H1 (cell line): ENCODE measurements at regions of chr2 and their contacts with region 1.

Region 1: DNA sequence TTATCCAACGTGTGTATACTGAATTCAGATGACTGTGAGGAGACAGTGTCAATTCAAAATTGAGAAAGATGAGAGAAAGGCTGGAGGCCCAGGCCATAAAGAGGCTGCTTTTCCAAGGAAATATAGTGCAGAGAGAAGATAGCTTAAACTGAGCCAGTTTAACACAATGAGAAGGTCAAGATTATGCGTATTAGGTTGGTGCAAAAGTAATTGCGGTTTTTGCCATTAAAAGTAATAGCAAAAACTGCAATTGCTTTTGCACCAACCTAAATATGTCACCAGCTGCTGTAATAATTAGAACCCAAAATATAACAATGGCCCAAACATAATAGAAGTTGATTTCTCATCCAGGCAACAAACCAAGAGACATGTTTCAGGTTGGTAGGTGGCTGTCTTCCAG is 148.7 kb upstream of the ATP5MC3 start:
- DNase-seq: no peak
- H3K4me3 ChIP-seq: no peak overlapping the region
- H3K27ac ChIP-seq: no peak overlapping the region
- H3K4me1 ChIP-seq: no peaks in the 10 kb centered on the region
- H3K27me3 ChIP-seq: no peaks in the 10 kb centered on the region
- CTCF ChIP-seq: no peak
- EP300 ChIP-seq: no peak
- POLR2A ChIP-seq: no peak
- RAD21 ChIP-seq: no peak

Region 2: DNA sequence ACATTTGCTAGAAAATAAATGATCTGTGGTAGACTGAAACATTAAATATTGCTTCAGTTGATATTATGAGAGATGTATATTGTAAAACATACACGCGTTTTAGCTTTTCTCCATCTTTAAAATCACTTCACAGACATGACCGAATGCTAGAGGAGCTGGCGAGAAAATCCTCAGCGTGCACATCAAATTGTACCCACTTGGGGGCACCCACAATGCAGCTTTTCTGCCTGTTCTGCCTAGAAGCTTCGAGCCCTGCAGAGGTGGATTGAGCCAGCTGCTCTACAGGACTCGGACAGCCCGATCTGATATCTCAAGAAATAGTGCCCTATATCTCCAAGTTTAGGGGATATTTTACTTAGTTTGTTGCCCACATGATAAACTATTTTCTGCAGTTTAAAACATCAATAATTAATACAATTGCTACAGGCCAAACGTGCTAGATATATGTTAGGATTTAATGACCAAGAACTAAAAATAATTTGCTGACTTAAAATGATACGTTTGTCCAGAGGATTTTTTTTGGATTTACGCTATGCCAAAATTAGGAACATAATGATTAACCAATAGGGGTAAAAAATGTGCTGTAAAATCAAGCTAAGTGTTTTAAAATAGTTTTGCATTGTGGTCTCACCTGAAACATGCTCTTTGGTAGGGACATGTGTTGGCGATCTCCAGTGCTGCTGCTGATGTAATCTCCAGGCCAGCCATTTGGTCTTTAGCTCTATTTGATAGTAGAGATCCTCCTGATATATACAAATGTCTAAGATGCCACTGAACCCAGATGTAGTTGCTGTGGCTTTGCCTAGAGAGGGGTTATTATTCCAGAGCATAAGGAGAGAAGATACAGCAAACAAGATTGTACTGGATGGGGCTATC is 126.3 kb before region 1 on chr2:
- CTCF ChIA-PET with region 1: interaction called, 19 read pairs
- POLR2A ChIA-PET with region 1: interaction called, 3 read pairs
- DNase-seq: peak in 1 of 2 experiments; percentile 67
- H3K4me3 ChIP-seq: no peak overlapping the region
- H3K27ac ChIP-seq: no peak overlapping the region
- H3K4me1 ChIP-seq: no peaks in the 10 kb centered on the region
- H3K27me3 ChIP-seq: no peaks in the 10 kb centered on the region; a peak in 1 of 7 replicates
- CTCF ChIP-seq: peak; percentile 59 to 75 (median 73)
- EP300 ChIP-seq: no peak
- POLR2A ChIP-seq: no peak
- RAD21 ChIP-seq: peak; percentile 70 to 83

Region 3: GRCh38 chr2:175304541-175304940 is 25.7 kb before region 1 on chr2:
- CTCF ChIA-PET with region 1: interaction called, 18 read pairs
- POLR2A ChIA-PET with region 1: no interaction called
- DNase-seq: no peak
- H3K4me3 ChIP-seq: no peak overlapping the region
- H3K27ac ChIP-seq: no peak overlapping the region
- H3K4me1 ChIP-seq: no peaks in the 10 kb centered on the region
- H3K27me3 ChIP-seq: no peaks in the 10 kb centered on the region; a peak in 1 of 7 replicates
- CTCF ChIP-seq: no peak
- EP300 ChIP-seq: no peak
- POLR2A ChIP-seq: no peak
- RAD21 ChIP-seq: no peak

Region 4: DNA sequence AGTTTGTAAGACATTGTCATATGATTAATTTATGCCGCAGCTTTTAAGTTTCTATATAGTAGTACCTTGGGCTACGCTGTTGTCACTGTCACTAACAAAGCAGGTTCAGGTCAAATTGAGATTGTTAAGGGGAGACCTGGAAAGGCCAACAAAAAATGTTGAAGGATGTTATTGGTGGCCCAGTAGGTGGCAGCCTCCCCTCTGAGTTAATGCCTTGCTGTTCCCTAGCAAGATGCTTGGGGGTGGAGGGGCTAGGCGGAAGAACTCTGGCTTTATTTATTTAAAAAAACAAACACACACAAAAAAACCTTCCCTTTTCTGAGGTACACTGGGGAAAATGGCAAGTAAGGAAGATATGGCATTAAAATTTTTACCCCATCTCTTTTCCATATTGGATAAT is 20.4 kb before region 1 on chr2:
- CTCF ChIA-PET with region 1: interaction called, 32 read pairs
- POLR2A ChIA-PET with region 1: no interaction called
- DNase-seq: peak; percentile 23 to 54
- H3K4me3 ChIP-seq: no peak overlapping the region
- H3K27ac ChIP-seq: no peak overlapping the region
- H3K4me1 ChIP-seq: no peaks in the 10 kb centered on the region
- H3K27me3 ChIP-seq: no peaks in the 10 kb centered on the region
- CTCF ChIP-seq: peak; percentile 32 to 52 (median 52)
- EP300 ChIP-seq: no peak
- POLR2A ChIP-seq: no peak
- RAD21 ChIP-seq: peak; percentile 58 to 73

Region 5: GRCh38 chr2:175662335-175662734 is 332.1 kb after region 1 on chr2:
- CTCF ChIA-PET with region 1: no interaction called
- POLR2A ChIA-PET with region 1: no interaction called
- DNase-seq: no peak
- H3K4me3 ChIP-seq: no peak overlapping the region
- H3K27ac ChIP-seq: no peak overlapping the region
- H3K4me1 ChIP-seq: no peaks in the 10 kb centered on the region
- H3K27me3 ChIP-seq: no peaks in the 10 kb centered on the region
- CTCF ChIP-seq: no peak
- EP300 ChIP-seq: no peak
- POLR2A ChIP-seq: no peak
- RAD21 ChIP-seq: no peak